GM10248 (cell line): ENCODE measurements at regions of chr3 and their contacts with region 1.

Region 1: GRCh38 chr3:185942907-185943759 is 5.3 kb upstream of the TRA2B start:
- DNase-seq: peak; percentile 84
- CTCF ChIP-seq: peak; percentile 99

Region 2: GRCh38 chr3:185959609-185960517 is 16.7 kb after region 1 on chr3:
- CTCF ChIA-PET with region 1: interaction called, 148 read pairs
- POLR2A ChIA-PET with region 1: no interaction called
- DNase-seq: no peak
- CTCF ChIP-seq: no peak

Region 3: GRCh38 chr3:185976977-185977678 is 34.0 kb after region 1 on chr3:
- CTCF ChIA-PET with region 1: interaction called, 26 read pairs
- POLR2A ChIA-PET with region 1: no interaction called
- DNase-seq: peak; percentile 79
- CTCF ChIP-seq: peak; percentile 87

Region 4: DNA sequence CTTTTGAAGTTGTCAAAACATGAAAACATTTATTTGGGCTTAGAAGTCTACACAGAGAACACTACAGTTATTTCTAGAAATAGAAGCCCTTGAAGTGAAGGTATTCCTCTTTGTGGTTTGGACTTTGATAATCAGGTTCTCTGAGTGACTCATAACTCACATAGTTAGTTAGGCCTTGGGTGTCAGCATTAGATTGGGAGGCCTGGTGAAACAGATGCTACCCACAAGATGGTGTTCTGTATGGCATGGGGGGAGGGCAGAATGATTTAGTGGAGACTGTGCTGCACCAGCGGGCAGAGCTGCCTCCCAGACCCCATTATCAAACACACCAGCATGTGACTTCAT is 274.7 kb after region 1 on chr3:
- CTCF ChIA-PET with region 1: interaction called, 12 read pairs
- POLR2A ChIA-PET with region 1: no interaction called
- DNase-seq: peak; percentile 76
- CTCF ChIP-seq: no peak

Region 5: GRCh38 chr3:186259612-186260383 is 316.7 kb after region 1 on chr3:
- CTCF ChIA-PET with region 1: interaction called, 18 read pairs
- POLR2A ChIA-PET with region 1: no interaction called
- DNase-seq: peak; percentile 86
- CTCF ChIP-seq: peak; percentile 97

Region 6: DNA sequence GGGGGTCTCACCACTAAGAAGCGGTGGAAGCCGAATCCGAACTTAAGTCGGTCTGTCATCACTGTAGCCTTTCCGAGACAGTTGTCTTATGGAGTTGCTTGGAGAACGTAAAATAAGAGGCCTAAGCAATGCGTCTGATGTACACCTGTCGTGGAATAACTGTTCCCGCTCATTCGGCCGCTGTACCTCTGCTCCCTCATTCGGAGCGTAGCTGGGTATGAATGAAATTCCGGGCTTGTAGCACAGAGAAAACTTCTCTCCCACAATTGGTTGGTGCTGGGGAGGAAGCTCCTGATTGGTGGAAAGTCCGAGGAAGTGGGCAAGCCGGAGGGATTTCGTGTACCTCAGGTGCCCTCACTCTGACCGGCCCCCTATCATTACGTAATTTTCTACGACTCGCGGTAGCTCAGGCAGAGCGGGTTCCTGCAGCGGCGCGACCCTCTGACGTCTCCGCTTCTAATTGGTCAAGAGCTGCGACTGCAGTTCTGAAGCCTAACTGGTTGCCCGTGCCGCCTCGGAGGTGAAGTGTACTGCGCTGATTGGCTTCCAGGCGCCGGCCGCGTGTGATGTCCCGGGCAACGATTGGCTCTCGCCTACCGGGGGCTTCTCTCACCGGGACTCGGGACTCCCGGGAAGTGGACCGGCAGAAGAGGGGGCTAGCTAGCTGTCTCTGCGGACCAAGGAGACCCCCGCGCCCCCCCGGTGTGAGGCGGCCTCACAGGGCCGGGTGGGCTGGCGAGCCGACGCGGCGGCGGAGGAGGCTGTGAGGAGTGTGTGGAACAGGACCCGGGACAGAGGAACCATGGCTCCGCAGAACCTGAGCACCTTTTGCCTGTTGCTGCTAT is 627.2 kb after region 1 on chr3 and contains the start of gene DNAJB11:
- CTCF ChIA-PET with region 1: interaction called, 24 read pairs
- POLR2A ChIA-PET with region 1: interaction called, 6 read pairs
- DNase-seq: peak; percentile 98
- CTCF ChIP-seq: no peak